PC-9 (cell line): ENCODE measurements at regions of chr5 and their contacts with region 1.

Region 1: GRCh38 chr5:137075163-137075970 is 423.8 kb downstream of the SPOCK1 start:
- DNase-seq: peak; percentile 72 to 84
- H3K4me3 ChIP-seq: no peak overlapping the region
- H3K27ac ChIP-seq: no peak overlapping the region
- H3K4me1 ChIP-seq: peaks cover 44% of the 10 kb centered on the region
- H3K27me3 ChIP-seq: no peaks in the 10 kb centered on the region
- CTCF ChIP-seq: peak; percentile 85

Region 2: DNA sequence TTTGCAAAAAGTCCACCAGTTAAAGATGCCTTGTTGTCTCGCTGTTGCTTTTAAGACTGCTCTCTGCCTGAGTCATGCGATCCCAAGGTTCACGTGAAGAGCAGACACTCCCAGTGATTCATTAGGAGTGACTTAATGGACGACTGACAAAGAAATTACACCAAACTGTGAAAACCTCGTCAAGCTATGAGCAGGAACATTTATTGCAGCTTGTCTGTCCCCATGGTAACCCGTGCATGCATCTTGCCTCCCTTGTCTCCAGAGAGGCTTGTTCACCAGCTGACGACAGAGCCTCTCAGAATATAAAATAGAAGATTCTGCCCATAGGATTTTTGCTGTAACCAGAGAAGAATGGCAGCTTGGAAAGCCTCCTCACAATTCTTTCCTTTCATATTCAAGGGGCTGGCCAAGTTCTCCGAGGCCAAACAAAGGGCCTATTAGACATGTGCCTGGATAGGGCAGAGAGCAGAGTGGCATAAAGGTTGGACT is 71.1 kb after region 1 on chr5:
- CTCF ChIA-PET with region 1: interaction called, 3 read pairs
- POLR2A ChIA-PET with region 1: no interaction called
- intact Hi-C with region 1: loop called (anchors 1 kb)
- DNase-seq: peak; percentile 49 to 90
- H3K4me3 ChIP-seq: peak overlapping the region; percentile 34; the same call in 1 of the 2 replicates
- H3K27ac ChIP-seq: peak overlapping the region; percentile 65
- H3K4me1 ChIP-seq: peaks cover 43% of the 10 kb centered on the region
- H3K27me3 ChIP-seq: no peaks in the 10 kb centered on the region
- CTCF ChIP-seq: no peak

Region 3: DNA sequence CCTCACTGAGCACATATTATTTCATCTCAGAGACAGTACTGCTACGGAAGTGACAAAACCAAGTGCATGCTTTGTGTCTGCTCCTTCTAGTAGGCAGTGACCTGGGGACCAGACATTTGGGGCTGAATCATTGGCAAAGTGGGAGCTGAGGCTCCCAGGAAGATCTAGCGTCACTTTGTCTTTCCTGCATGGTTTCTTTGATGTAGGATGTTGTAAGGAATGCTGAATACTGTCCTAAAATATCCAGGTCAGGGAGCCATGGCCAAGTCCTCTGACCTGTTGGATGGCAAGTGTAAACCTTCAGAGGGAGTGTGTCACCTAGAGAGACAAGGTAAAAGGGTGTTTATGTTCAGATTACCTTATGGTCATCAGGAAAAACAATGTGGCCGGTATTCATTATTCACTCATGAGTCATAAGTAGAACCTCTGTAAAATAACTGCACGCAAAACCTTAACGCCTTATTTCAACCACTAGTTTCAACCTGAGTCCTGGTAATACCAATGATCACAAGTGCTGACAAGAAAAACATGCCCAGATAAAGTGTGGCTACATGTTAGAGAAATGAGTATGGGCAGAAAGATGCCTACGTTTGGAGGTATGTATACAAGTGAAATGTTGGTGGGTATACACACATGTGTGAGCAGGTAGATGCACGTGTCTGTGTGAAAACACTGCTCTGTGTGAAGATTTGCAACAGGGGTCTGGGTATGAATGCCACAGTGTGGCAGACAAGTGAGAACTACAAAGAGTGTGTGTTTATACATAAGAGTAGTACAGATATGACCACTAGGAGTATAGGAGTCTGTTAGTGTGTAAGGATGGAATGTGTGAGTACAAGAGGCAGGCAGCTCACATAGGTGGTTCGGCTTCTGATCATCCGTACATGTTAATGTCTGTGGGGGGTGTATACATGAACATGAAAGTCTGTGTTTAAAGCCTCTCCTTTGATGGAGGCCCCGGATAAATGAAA is 159.9 kb after region 1 on chr5:
- CTCF ChIA-PET with region 1: no interaction called
- POLR2A ChIA-PET with region 1: no interaction called
- intact Hi-C with region 1: loop called (anchors 1 kb)
- DNase-seq: peak; percentile 58 to 98
- H3K4me3 ChIP-seq: 0 out of 2 replicates have a peak overlapping the region, but pooled peaks have one; percentile 12
- H3K27ac ChIP-seq: peak overlapping the region; percentile 81
- H3K4me1 ChIP-seq: peaks cover 57% of the 10 kb centered on the region
- H3K27me3 ChIP-seq: no peaks in the 10 kb centered on the region
- CTCF ChIP-seq: no peak

Region 4: GRCh38 chr5:137310051-137310730 is 234.8 kb after region 1 on chr5:
- CTCF ChIA-PET with region 1: no interaction called
- POLR2A ChIA-PET with region 1: no interaction called
- intact Hi-C with region 1: loop called (anchors 1 kb)
- DNase-seq: peak; percentile 29 to 92
- H3K4me3 ChIP-seq: no peak overlapping the region
- H3K27ac ChIP-seq: peak overlapping the region; percentile 68
- H3K4me1 ChIP-seq: peaks cover 26% of the 10 kb centered on the region
- H3K27me3 ChIP-seq: no peaks in the 10 kb centered on the region
- CTCF ChIP-seq: no peak

Region 5: GRCh38 chr5:137498736-137499505 is 423.6 kb after region 1 on chr5 and contains the start of gene SPOCK1:
- CTCF ChIA-PET with region 1: no interaction called
- POLR2A ChIA-PET with region 1: no interaction called
- intact Hi-C with region 1: loop called (anchors 1 kb)
- DNase-seq: peak; percentile 46 to 81
- H3K4me3 ChIP-seq: peak within 1 kb of the TSS; percentile 48; the same call in 1 of the 2 replicates
- H3K27ac ChIP-seq: no peak within 1 kb of the TSS
- H3K4me1 ChIP-seq: no peaks in the 10 kb centered on the region
- H3K27me3 ChIP-seq: no peaks in the 10 kb centered on the region
- CTCF ChIP-seq: peak; percentile 47; the same call in 1 of the 2 replicates
- total RNA-seq, gene SPOCK1: 23.9 and 31.8 TPM in 2 replicates